Colonic mucosa (tissue), 4 donors: ENCODE measurements at regions of chr4 and their contacts with region 1.

Region 1: DNA sequence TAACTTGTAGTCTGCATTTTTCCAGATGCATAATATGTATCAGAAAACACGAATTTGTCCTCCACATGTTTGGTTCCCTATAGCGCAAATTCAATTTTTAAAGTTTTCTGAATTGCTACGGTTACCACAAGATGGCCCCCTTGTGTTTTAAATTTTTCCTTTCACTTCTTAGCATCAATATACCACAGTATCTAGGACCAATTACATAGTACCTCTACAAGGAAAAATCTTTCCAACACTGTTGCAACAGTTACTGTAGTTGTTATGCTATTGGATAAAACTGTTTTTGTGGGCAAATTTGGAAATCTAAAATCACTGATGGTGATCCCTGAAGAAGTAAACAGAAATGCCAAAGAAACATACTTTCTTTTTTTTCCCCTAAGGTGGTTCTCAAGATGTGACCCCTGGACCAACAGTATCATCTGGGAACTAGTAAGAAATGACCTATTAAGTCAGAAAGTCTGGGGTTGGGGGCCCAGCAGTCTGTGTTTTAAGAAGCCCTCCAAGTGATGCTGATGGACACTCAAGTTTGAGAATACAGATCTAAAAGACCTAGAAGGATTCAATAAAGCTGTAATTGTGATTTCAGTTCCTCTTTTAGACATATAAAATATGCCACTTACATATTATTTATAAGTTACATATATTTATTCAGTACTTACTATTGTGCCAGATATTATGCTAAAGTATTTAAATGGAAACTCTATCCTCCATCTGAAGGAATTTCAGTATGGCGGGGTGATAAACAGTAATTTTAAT is 3.1 kb downstream of the ZGRF1 start:
- DNase-seq: no peak
- H3K4me3 ChIP-seq: no peak overlapping the region
- H3K27ac ChIP-seq: no peak overlapping the region
- H3K4me1 ChIP-seq: no peaks in the 10 kb centered on the region
- H3K27me3 ChIP-seq: no peaks in the 10 kb centered on the region
- CTCF ChIP-seq: no peak

Region 2: GRCh38 chr4:112765317-112765975 is 131.8 kb after region 1 on chr4:
- intact Hi-C with region 1: loop called (anchors 5 kb)
- DNase-seq: no peak
- H3K4me3 ChIP-seq: no peak overlapping the region
- H3K27ac ChIP-seq: no peak overlapping the region
- H3K4me1 ChIP-seq: no peaks in the 10 kb centered on the region
- H3K27me3 ChIP-seq: no peaks in the 10 kb centered on the region
- CTCF ChIP-seq: no peak

Region 3: DNA sequence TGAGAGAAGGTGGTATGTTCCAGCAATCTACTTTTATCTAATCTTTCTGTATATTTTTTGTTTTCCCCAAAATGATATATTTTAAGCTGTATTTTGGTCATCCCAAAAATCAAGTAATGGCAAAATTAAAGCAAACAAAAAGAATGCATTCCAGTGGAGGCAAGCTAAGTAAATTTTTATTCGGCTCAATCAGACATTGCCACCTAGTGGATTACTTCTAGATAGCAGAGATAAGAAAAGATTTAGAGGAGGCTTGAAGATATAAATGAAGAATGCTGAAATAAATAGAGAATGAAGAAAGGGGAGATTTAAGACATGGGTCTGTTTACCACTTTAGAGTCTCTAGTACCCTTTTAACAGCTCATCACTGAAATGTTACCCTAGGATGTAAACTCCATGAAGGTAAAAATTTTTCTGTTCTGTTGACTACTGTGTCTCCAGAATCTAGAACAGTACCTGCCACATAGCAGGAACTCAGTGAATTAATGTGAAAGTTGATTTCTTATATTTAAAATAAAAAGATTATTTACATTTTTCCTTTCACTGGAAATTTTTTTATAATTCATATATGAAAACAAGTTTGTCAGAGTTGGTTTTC is 304.9 kb after region 1 on chr4:
- intact Hi-C with region 1: loop called (anchors 5 kb)
- DNase-seq: no peak
- H3K4me3 ChIP-seq: no peak overlapping the region
- H3K27ac ChIP-seq: no peak overlapping the region
- H3K4me1 ChIP-seq: no peaks in the 10 kb centered on the region
- H3K27me3 ChIP-seq: no peaks in the 10 kb centered on the region
- CTCF ChIP-seq: peak; percentile 36